ENCODE measurements at regions of chr2 and their contacts with region 1.

Region 1: DNA sequence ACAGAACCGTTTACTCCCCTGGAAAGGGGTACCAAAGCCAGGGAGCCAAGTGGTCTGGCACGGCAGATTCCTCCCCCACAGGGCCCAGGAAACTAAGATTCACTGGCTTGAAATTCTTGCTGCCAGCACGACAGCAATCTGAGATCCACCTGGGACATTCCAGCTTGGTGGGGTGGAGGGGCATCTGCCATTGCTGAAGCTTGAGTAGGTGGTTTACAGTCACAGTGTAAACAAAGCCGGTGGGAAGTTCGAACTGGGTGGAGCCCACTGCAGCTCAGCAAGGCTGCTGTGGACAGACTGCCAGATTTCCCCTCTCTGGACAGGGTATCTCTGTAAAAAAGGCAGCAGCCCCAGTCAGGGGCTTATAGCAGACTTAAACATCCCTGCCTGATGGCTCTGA is 901.7 kb upstream of the LRRTM1 start:
- DNase-seq: no peak
- H3K4me3 ChIP-seq: no peak overlapping the region
- H3K27ac ChIP-seq: no peak overlapping the region
- H3K4me1 ChIP-seq: no peaks in the 10 kb centered on the region
- CTCF ChIP-seq: no peak

Region 2: DNA sequence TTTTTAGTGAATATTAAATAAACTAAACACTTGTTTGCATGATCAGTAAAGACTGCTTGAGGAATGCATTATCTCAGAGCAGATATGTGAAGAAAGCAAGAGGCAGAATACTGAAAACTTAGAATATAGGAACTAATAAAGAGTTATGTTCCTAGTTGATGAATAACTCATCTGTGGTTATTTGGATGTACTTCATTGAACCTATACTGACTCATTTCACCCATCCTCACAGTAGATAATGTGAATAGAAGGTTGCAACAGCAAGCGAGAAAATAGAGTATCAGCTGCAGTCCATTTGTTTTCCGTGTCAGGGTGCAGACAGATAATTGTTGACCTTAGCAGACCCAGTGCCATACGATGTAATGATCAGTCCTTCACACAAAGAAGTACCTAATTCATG is 44.1 kb after region 1 on chr2:
- CTCF ChIA-PET with region 1: no interaction called
- POLR2A ChIA-PET with region 1: interaction called, 10 read pairs
- intact Hi-C with region 1: no loop called
- DNase-seq: no peak
- H3K4me3 ChIP-seq: no peak overlapping the region
- H3K27ac ChIP-seq: no peak overlapping the region
- H3K4me1 ChIP-seq: no peaks in the 10 kb centered on the region
- CTCF ChIP-seq: no peak